BJ (cell line): ENCODE measurements at regions of chr6 and their contacts with region 1.

Region 1: DNA sequence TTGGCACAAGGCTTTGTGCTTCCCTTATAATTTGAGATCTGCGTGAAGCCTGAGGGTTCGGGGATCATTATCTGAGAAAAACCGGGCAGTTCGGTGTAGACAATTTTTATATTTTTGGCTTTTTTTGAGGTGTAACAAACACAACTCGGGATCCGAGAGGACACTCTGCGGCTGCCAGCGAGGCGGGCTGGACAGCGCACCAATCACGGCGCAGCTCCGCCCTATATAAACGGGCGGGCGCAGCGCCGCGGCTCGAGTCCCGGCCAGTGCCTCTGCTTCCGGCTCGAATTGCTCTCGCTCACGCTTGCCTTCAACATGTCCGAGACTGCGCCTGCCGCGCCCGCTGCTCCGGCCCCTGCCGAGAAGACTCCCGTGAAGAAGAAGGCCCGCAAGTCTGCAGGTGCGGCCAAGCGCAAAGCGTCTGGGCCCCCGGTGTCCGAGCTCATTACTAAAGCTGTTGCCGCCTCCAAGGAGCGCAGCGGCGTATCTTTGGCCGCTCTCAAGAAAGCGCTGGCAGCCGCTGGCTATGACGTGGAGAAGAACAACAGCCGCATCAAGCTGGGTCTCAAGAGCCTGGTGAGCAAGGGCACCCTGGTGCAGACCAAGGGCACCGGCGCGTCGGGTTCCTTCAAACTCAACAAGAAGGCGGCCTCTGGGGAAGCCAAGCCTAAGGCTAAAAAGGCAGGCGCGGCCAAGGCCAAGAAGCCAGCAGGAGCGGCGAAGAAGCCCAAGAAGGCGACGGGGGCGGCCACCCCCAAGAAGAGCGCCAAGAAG is 69.0 kb downstream of the HFE start:
- DNase-seq: peak; percentile 65
- H3K4me3 ChIP-seq: peak overlapping the region; percentile 54
- H3K27me3 ChIP-seq: no peaks in the 10 kb centered on the region
- CTCF ChIP-seq: no peak; the same call in 1 of the 2 replicates

Region 2: GRCh38 chr6:26172496-26172958 is 16.3 kb after region 1 on chr6:
- CTCF ChIA-PET with region 1: interaction called, 4 read pairs
- POLR2A ChIA-PET with region 1: interaction called, 19 read pairs
- DNase-seq: no peak
- H3K4me3 ChIP-seq: peak overlapping the region; percentile 46
- H3K27me3 ChIP-seq: no peaks in the 10 kb centered on the region
- CTCF ChIP-seq: no peak

Region 3: GRCh38 chr6:26183581-26184366 is 27.5 kb after region 1 on chr6:
- CTCF ChIA-PET with region 1: interaction called, 3 read pairs
- POLR2A ChIA-PET with region 1: interaction called, 27 read pairs
- DNase-seq: peak; percentile 92
- H3K4me3 ChIP-seq: peak overlapping the region; percentile 32
- H3K27me3 ChIP-seq: no peaks in the 10 kb centered on the region
- CTCF ChIP-seq: no peak

Region 4: DNA sequence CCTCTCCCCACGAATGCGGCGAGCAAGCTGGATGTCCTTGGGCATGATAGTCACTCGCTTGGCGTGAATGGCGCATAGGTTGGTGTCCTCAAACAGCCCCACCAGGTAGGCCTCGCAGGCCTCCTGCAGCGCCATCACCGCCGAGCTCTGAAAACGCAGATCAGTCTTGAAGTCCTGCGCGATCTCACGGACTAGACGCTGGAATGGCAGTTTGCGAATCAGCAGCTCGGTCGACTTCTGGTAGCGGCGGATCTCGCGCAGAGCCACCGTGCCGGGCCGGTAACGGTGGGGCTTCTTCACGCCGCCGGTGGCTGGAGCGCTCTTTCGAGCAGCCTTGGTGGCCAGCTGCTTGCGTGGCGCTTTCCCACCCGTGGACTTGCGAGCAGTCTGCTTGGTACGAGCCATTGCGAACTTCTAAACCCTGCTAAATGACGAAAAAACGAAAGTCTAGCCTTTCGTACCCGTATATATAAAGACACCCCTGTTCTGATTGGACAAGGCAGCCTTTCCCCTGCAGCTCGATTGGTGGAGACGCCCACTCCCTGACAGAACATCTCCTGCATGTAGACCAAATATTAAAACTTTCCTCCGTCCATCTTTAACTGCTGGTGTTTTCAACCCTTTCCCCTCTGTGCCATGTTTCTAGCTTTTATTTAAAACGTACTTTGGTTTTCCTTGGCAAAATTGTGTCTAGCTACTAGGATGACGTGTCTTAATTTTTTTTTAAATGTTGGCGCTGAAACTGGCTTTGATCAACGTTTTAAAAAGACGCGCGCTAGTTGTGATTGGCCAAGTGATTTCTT is 40.8 kb after region 1 on chr6:
- CTCF ChIA-PET with region 1: interaction called, 3 read pairs
- POLR2A ChIA-PET with region 1: interaction called, 83 read pairs
- DNase-seq: peak; percentile 83
- H3K4me3 ChIP-seq: peak overlapping the region; percentile 82
- H3K27me3 ChIP-seq: no peaks in the 10 kb centered on the region
- CTCF ChIP-seq: 0 out of 2 replicates have a peak, but pooled peaks have one; percentile 13

Region 5: DNA sequence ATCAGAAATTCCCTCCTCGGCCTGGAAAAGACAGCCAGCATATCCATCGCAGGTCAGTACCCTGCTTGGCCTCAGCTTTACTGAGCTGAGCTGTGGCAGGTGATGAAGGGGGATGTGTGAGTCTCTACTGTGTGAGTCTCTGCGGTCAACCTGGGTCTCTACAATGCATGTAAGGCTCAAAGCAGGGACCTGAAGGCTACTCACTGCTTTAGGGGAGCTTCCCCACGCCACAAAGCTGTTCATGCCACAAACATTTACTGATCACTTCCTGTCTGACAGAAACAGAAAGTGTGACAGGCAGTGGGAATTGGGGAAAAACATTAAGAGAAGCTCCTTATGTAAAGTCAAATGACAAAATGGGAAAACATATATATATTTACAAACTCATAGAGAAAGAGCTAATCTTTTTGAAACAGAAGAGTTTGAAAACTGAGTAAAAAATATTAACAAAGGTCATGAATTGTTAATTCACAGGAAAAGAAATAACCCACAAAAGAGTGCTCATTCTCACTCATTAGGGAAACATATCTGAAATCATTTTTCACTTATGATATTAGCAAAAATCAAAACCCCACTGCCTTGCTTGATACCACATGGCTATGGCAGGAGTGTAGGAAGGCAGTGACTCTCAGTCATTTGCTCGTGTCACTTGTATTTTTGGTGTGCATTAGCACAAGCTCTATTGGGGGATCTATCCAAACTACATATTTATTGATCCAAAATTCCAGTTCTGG is 289.8 kb after region 1 on chr6:
- CTCF ChIA-PET with region 1: no interaction called
- POLR2A ChIA-PET with region 1: no interaction called
- DNase-seq: no peak
- H3K4me3 ChIP-seq: no peak overlapping the region
- H3K27me3 ChIP-seq: no peaks in the 10 kb centered on the region; the same call in 1 of the 2 replicates
- CTCF ChIP-seq: no peak

Region 6: DNA sequence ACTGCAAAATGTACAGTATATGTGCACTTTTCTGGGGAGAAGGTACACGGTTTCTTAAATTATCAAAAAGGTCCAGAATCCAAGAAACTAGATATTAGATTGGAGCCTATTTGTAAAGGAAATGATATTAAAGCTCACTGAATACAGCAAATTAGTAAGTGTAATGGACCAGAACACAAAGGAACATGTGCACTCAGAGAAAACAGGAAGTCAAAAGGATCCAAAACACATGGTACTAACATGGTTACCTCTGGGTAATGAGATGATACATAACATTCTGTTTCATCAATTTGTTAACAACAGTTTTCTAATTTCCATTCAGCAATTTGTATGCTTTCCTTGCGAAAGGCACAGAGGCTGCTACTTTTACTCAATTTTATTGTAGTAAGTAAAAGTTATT is 484.5 kb after region 1 on chr6:
- CTCF ChIA-PET with region 1: no interaction called
- POLR2A ChIA-PET with region 1: no interaction called
- DNase-seq: no peak
- H3K4me3 ChIP-seq: no peak overlapping the region
- H3K27me3 ChIP-seq: no peaks in the 10 kb centered on the region
- CTCF ChIP-seq: no peak